K562 (cell line): ENCODE measurements at regions of chr17 and their contacts with region 1.

Region 1: GRCh38 chr17:22266231-22266630 is 573.9 kb downstream of the KCNJ18 start:
- DNase-seq: peak; percentile 28 to 73 (median 58)
- ATAC-seq: peak; percentile 91
- H3K4me3 ChIP-seq: 0 out of 2 replicates have a peak overlapping the region, but pooled peaks have one; percentile 2
- H3K27ac ChIP-seq: no peak overlapping the region
- H3K4me1 ChIP-seq: peaks cover 2 to 10% of the 10 kb centered on the region in 2 experiments; a peak in 4 of 5 replicates
- H3K27me3 ChIP-seq: no peaks in the 10 kb centered on the region
- CTCF ChIP-seq: no peak
- EP300 ChIP-seq: no peak
- POLR2A ChIP-seq: no peak
- RAD21 ChIP-seq: no peak

Region 2: GRCh38 chr17:22221344-22221743 is 44.9 kb before region 1 on chr17:
- CTCF ChIA-PET with region 1: no interaction called
- POLR2A ChIA-PET with region 1: no interaction called
- in situ Hi-C with region 1: loop called (anchors 5 kb)
- intact Hi-C with region 1: no loop called
- DNase-seq: peak; percentile 15 to 67 (median 23)
- ATAC-seq: peak; percentile 85
- H3K4me3 ChIP-seq: no peak overlapping the region
- H3K27ac ChIP-seq: no peak overlapping the region; the same call in 2 of the 3 replicates
- H3K4me1 ChIP-seq: peaks cover 9 to 14% of the 10 kb centered on the region in 2 experiments; a peak in 3 of 5 replicates
- H3K27me3 ChIP-seq: no peaks in the 10 kb centered on the region
- CTCF ChIP-seq: no peak
- EP300 ChIP-seq: no peak
- POLR2A ChIP-seq: no peak
- RAD21 ChIP-seq: no peak

Region 3: GRCh38 chr17:22569459-22570143 is 303.4 kb after region 1 on chr17:
- CTCF ChIA-PET with region 1: no interaction called
- POLR2A ChIA-PET with region 1: no interaction called
- in situ Hi-C with region 1: no loop called
- intact Hi-C with region 1: no loop called
- DNase-seq: no peak
- ATAC-seq: no peak
- H3K4me3 ChIP-seq: no peak overlapping the region
- H3K27ac ChIP-seq: no peak overlapping the region
- H3K4me1 ChIP-seq: no peaks in the 10 kb centered on the region
- H3K27me3 ChIP-seq: no peaks in the 10 kb centered on the region
- CTCF ChIP-seq: no peak
- EP300 ChIP-seq: no peak
- POLR2A ChIP-seq: no peak
- RAD21 ChIP-seq: no peak